Motor neuron (in vitro differentiated cells): ENCODE measurements at regions of chr1 and their contacts with region 1.

Region 1: GRCh38 chr1:29230553-29231378 is at the start of gene MECR:
- ATAC-seq: peak; percentile 94 to 99 (median 96)
- H3K4me3 ChIP-seq: peak within 1 kb of the TSS; percentile 60 to 93 (median 82)
- H3K27ac ChIP-seq: peak within 1 kb of the TSS; percentile 49 to 69
- H3K4me1 ChIP-seq: peaks cover 6 to 18% of the 10 kb centered on the region in 2 donors
- total RNA-seq, gene MECR: 24.2 to 42.9 (median 29.2) TPM

Region 2: DNA sequence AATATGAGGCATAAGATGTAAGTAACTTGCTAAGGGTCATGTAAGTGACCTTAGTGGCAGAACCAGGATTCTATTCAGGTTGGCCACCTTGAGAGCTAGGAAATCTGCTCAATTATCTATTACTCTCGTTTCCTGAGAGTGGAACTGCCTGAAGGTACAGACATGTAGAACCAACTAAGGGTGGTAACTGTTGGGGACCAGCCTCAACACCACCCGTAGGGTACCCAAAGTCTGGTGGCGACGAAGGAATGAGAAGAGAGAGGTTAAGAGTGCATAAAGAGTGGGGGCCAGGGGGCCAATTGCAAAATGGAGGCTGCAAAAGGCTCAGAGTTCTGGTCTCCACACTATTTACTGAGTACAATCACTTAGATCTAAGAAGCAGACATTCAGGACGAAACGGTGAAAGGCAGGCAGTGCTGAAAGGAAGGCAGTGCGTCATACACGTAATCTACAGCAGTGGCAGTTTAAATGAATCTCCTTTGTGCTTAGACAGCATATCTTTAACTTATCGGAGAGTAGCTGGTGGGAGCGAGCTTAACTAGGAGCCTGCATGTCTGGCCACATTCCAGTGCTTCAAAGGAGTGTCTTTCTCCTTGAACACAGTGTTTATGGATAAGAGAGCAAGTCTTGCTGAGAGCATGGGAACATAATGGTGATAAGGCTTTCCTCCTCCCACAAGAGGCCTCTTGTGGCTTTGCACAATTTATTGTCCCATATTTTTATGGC is 74.1 kb before region 1 on chr1:
- in situ Hi-C with region 1: no loop called
- ATAC-seq: no peak
- H3K4me3 ChIP-seq: no peak overlapping the region
- H3K27ac ChIP-seq: no peak overlapping the region
- H3K4me1 ChIP-seq: no peaks in the 10 kb centered on the region

Region 3: GRCh38 chr1:29698033-29698432 is 467.3 kb after region 1 on chr1:
- in situ Hi-C with region 1: loop called in 1 of 9 experiments (anchors 25 kb)
- ATAC-seq: peak; percentile 63 to 98 (median 86)
- H3K4me3 ChIP-seq: no peak overlapping the region
- H3K27ac ChIP-seq: no peak overlapping the region
- H3K4me1 ChIP-seq: peaks cover 16 to 28% of the 10 kb centered on the region in 2 donors

Region 4: GRCh38 chr1:30085811-30086770 is 855.3 kb after region 1 on chr1:
- in situ Hi-C with region 1: loop called in 1 of 9 experiments (anchors 25 kb)
- ATAC-seq: peak; percentile 41 to 95 (median 90)
- H3K4me3 ChIP-seq: no peak overlapping the region
- H3K27ac ChIP-seq: peak overlapping the region in 1 of 2 donors; percentile 32
- H3K4me1 ChIP-seq: peaks cover 0 to 31% of the 10 kb centered on the region in 2 donors

Region 5: GRCh38 chr1:30379684-30380624 is 1149.2 kb after region 1 on chr1:
- in situ Hi-C with region 1: loop called in 1 of 9 experiments (anchors 25 kb)
- ATAC-seq: peak; percentile 37 to 83 (median 48)
- H3K4me3 ChIP-seq: no peak overlapping the region
- H3K27ac ChIP-seq: no peak overlapping the region
- H3K4me1 ChIP-seq: peaks cover 12 to 45% of the 10 kb centered on the region in 2 donors

Region 6: GRCh38 chr1:30718636-30719405 is 1488.1 kb after region 1 on chr1:
- in situ Hi-C with region 1: loop called in 5 of 9 experiments (anchors 25 kb)
- ATAC-seq: peak; percentile 63 to 75 (median 66)
- H3K4me3 ChIP-seq: peak overlapping the region; percentile 28 to 41 (median 31)
- H3K27ac ChIP-seq: peak overlapping the region; percentile 96 to 98
- H3K4me1 ChIP-seq: peaks cover 6 to 8% of the 10 kb centered on the region in 2 donors